Activated T-helper 2 cell treated with anti-CD3 and anti-CD28 coated beads, Interferon-gamma antibody, Interleukin-2, Interleukin-4, amounts not matched to agents 10 μg/mL and 5 μg/mL and 100 μg/mL, durations not matched to agents 14 hours and 24 hours and 36 hours (primary cell): ENCODE measurements at regions of chr3 and their contacts with region 1.

Region 1: DNA sequence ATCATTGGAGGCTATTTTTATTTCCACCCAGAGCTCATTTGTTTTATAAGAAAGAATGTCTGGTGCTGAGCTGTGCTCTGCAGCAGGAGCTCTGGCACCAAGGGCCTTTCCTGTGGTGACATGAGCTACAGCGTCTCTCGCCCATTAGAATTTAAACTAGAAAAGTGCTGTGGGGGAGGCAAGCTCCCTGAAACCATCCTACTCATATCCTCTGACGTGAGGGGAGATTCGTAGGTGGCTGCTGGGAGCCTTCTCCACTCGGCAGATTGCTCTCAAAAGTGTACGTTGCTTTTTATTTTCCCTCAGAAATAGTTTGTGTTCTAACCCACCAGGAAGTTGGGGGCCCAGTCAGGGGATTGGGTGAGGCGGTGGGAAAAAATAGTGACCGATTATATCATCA is 76.3 kb upstream of the ARHGEF3 start:
- DNase-seq: peak; percentile 22
- H3K4me3 Mint-ChIP-seq: peak overlapping the region; percentile 40
- H3K27ac Mint-ChIP-seq: peak overlapping the region; percentile 94
- H3K4me1 Mint-ChIP-seq: peaks cover 80% of the 10 kb centered on the region
- H3K27me3 Mint-ChIP-seq: no peaks in the 10 kb centered on the region

Region 2: GRCh38 chr3:56783644-56784447 is 94.2 kb before region 1 on chr3:
- intact Hi-C with region 1: loop called (anchors 5 kb)
- DNase-seq: peak; percentile 70
- H3K4me3 Mint-ChIP-seq: peak overlapping the region; percentile 76
- H3K27ac Mint-ChIP-seq: peak overlapping the region; percentile 95
- H3K4me1 Mint-ChIP-seq: peaks cover 80% of the 10 kb centered on the region
- H3K27me3 Mint-ChIP-seq: no peaks in the 10 kb centered on the region

Region 3: DNA sequence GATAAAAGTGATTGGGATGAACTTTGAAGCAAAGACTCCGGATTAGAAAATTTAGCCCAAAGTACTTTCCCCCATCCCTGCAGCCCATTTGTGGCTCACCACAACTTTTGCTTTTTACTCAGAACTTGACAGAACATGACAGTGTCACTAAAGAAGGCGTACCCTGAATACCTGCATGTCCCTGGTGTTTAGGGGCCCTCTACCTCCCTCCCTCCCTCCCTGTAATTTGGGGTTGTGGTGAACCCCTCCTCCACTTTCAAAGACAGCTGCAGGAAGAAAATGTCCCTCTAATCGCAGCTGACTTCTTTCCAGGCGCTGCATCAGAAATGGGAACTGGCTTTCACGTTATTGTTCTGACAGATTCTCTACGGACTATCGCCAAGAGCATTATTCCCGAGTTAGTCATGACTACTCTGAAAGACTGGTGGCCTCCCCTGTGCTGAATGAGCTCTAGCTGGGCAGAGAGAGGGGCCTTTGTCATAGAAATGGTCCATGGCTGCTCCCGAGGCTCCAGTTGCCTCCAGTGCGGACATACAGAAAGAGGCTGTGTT is 16.9 kb after region 1 on chr3:
- intact Hi-C with region 1: loop called (anchors 2 kb)
- DNase-seq: no peak
- H3K4me3 Mint-ChIP-seq: peak overlapping the region; percentile 13
- H3K27ac Mint-ChIP-seq: no peak overlapping the region
- H3K4me1 Mint-ChIP-seq: peaks cover 47% of the 10 kb centered on the region
- H3K27me3 Mint-ChIP-seq: no peaks in the 10 kb centered on the region

Region 4: GRCh38 chr3:56923521-56924224 is 45.6 kb after region 1 on chr3:
- intact Hi-C with region 1: loop called (anchors 1 kb)
- DNase-seq: peak; percentile 37
- H3K4me3 Mint-ChIP-seq: peak overlapping the region; percentile 31
- H3K27ac Mint-ChIP-seq: peak overlapping the region; percentile 83
- H3K4me1 Mint-ChIP-seq: peaks cover 61% of the 10 kb centered on the region
- H3K27me3 Mint-ChIP-seq: no peaks in the 10 kb centered on the region

Region 5: DNA sequence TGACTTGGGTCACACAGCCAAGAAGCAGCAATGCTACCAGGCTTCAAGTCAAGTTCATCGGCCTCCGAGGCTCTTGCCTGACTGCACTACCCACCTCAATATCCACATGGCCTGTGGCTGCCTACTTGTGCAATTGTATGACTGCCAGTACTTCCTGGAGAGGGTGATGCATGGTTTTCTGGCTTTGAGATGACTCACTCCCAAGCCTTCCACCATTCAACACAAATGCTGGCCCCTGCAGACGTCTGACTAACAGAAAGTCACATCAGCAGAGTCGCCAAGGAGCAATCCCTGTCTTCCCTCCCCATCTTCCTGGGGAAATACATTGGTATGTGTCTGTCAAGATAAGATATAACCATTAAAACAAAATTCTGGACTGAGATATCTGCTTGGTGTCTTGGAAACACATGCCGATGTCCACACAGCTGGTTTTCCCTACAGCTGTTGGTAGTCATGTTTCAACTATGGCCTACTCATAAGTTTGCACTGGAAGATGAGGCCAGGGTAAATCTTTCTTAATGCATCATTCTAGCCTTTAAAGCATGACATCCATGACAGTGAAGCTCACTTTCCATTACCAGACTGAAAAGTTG is 102.8 kb after region 1 on chr3:
- intact Hi-C with region 1: loop called (anchors 1 kb)
- DNase-seq: peak; percentile 22
- H3K4me3 Mint-ChIP-seq: no peak overlapping the region
- H3K27ac Mint-ChIP-seq: peak overlapping the region; percentile 72
- H3K4me1 Mint-ChIP-seq: peaks cover 26% of the 10 kb centered on the region
- H3K27me3 Mint-ChIP-seq: no peaks in the 10 kb centered on the region